ENCODE measurements at regions of chr7 and their contacts with region 1.

Region 1: DNA sequence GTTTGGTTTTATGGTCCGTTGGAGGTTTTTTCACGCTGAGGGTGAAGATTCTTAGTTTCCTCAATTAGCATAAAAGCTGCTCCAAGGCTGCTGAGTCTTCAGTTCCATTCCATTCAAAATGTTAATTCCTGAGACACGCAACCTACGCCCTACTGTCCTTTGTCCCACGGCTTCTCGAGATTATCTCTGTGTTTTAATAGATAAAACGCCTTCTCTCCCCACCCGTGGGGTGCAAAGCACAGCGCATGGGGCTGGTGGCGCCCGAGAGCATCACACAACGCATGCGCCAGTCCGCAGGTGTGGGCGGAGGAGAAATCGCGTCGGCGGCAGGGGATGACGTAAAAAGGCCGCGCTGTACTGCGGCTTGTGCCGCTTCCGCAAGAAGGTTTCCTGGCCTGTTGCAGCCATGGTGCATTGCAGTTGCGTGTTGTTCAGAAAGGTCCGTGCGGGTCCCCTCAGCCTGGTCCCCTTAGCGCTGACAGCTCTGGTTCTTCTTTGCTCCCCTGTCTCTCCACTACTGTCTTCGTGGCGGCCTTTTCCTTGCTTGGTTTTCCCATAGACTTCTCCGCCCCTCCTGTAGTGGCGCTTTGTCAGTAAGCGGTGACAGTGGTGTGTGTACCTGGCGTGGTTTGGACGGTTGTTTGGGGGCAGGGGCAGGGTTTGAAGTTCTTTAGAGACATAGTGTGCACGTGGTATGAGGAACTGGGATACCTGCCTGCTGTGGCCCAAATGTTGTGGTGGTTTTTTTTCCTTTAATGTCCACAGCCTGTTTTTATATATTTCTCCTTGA is at the start of gene GTPBP10:
- DNase-seq: peak; percentile 87
- H3K4me3 Mint-ChIP-seq: peak within 1 kb of the TSS; percentile 84
- H3K27ac Mint-ChIP-seq: peak within 1 kb of the TSS; percentile 79
- H3K4me1 Mint-ChIP-seq: peaks cover 17% of the 10 kb centered on the region
- H3K27me3 Mint-ChIP-seq: no peaks in the 10 kb centered on the region
- CTCF ChIP-seq: peak; percentile 32
- total RNA-seq, gene GTPBP10: 22.5 and 25.0 TPM in 2 replicates

Region 2: GRCh38 chr7:90412458-90413184 is 66.1 kb after region 1 on chr7:
- CTCF ChIA-PET with region 1: no interaction called
- intact Hi-C with region 1: loop called (anchors 5 kb)
- DNase-seq: peak; percentile 66
- H3K4me3 Mint-ChIP-seq: no peak overlapping the region
- H3K27ac Mint-ChIP-seq: no peak overlapping the region
- H3K4me1 Mint-ChIP-seq: peaks cover 19% of the 10 kb centered on the region
- H3K27me3 Mint-ChIP-seq: no peaks in the 10 kb centered on the region
- CTCF ChIP-seq: no peak

Measured in Calu3 (cell line).